ENCODE measurements at regions of chr17 and their contacts with region 1.

Region 1: DNA sequence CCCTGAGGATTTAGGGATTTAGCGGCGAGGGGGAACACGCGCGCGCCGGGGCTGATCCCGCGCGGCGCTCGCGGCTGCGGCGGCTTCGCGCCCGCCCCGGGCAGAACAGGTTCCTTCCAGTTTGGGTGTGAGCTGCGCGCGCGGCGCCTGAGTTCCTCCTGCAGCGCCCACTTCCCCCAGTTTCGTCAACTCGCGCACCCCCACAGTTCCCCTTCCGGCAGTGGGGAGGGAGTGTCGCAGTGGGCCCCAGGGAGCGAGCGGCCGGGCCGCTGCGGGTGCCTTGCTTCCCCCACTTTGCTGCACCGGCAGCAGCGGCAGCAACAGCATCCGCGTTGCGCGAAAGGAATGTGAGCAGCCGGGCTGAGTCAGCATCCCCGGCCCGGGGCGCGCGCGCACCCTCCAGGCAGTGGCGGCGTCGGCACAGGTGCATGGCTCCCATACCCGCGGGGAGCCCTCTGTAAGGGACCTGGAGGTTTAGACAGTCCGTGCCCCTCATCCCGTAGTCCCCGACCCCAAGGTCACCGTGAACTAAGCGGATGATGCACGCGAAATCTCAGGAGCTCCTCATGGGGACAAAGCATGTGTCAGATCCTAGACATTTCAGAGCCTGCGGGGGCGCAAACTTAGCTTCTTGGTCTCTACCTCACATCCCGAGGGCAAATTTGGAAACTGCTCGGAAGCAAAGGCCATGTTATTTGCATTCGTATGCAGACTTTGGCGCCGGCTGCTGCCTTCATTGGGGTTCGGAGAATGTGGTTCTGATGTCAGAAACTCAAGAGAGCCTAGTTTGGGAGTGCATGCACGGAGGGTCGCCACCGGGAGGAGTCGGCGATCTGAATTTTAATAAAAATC is 775 bp downstream of the ARSG start:
- DNase-seq: peak; percentile 96
- H3K4me3 ChIP-seq: peak overlapping the region; percentile 85
- H3K27ac ChIP-seq: peak overlapping the region; percentile 94
- H3K4me1 ChIP-seq: peaks cover 51% of the 10 kb centered on the region
- CTCF ChIP-seq: peak; percentile 75

Region 2: GRCh38 chr17:68172461-68172954 is 119.6 kb before region 1 on chr17:
- CTCF ChIA-PET with region 1: no interaction called
- POLR2A ChIA-PET with region 1: no interaction called
- intact Hi-C with region 1: loop called (anchors 2 kb)
- DNase-seq: peak; percentile 85
- H3K4me3 ChIP-seq: no peak overlapping the region
- H3K27ac ChIP-seq: no peak overlapping the region
- H3K4me1 ChIP-seq: peaks cover 20% of the 10 kb centered on the region
- CTCF ChIP-seq: peak; percentile 100

Region 3: GRCh38 chr17:68247445-68248198 is 44.4 kb before region 1 on chr17 and contains the start of gene AMZ2:
- CTCF ChIA-PET with region 1: no interaction called
- POLR2A ChIA-PET with region 1: interaction called, 11 read pairs
- intact Hi-C with region 1: no loop called
- DNase-seq: peak; percentile 97
- H3K4me3 ChIP-seq: peak within 1 kb of the TSS; percentile 80
- H3K27ac ChIP-seq: peak within 1 kb of the TSS; percentile 90
- H3K4me1 ChIP-seq: peaks cover 86% of the 10 kb centered on the region
- CTCF ChIP-seq: no peak
- total RNA-seq, gene AMZ2: 105 and 117 TPM in 2 replicates

Region 4: DNA sequence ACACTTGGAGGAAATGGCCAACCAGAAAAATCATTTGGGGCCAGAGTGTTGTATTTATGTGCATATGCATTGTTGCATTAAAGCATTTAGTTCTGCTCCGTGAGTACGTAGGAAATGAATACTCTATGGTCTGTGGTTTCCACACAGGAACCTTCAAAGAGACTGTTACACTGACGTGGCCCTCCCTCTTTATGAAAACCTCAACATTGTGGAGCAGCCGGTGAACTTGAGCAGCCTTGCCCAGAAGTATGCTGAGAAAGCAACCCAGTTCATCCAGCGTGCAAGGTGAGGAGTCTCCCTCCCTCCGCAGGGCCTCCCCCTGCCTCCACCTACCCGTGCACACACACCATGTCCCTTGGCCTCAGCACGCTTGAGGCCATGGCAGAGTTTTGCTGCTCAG is 64.5 kb after region 1 on chr17:
- CTCF ChIA-PET with region 1: interaction called, 3 read pairs
- POLR2A ChIA-PET with region 1: interaction called, 3 read pairs
- intact Hi-C with region 1: loop called (anchors 5 kb)
- DNase-seq: no peak
- H3K4me3 ChIP-seq: no peak overlapping the region
- H3K27ac ChIP-seq: no peak overlapping the region
- H3K4me1 ChIP-seq: peaks cover 5% of the 10 kb centered on the region
- CTCF ChIP-seq: no peak

Region 5: DNA sequence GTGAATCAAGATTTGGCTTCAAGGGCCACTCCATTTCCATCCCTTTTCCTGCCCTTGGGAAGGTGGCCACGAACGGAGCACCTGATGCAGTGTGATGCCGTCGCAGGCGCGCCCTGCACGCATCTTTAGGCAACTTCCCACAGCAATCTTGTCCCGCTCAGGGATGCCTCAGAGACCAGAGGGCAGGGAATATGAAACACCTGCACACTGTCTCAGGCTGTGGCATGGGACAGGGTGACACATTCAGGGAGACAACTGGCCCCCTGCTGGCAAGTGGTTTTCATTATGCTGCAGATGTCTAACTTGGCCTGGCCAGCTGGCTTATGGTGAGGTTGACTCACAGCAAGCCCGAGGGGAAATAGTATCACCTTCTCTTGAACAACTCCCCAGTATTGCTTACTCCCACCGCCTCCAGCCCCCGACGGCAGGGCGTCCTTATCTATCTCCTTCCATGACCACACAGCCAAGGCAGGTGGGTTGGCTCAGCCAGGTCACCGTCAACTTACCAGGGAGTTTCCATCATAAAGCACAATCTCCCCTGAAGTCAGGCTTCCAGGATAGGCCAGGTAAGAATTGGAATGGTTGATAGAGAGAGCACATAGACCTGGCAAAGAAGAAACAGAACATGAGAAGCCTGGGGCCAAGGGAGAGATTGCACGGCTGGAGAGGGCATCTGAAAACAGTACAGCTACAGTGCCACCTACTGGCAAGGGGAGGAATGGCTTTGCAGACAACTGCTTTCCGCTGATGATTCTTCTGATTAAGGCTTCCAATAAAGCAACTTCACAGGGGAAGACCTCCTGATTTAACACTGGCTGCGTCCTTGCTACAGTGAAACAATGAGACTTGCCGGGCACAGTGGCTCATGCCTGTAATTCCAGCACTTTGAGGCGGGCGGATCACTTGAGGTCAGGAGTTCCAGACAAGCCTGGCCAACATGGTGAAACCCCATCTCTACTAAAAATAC is 144.1 kb after region 1 on chr17:
- CTCF ChIA-PET with region 1: no interaction called
- POLR2A ChIA-PET with region 1: interaction called, 4 read pairs
- intact Hi-C with region 1: loop called (anchors 1 kb)
- DNase-seq: peak; percentile 93
- H3K4me3 ChIP-seq: peak overlapping the region; percentile 15
- H3K27ac ChIP-seq: peak overlapping the region; percentile 80
- H3K4me1 ChIP-seq: peaks cover 64% of the 10 kb centered on the region
- CTCF ChIP-seq: peak; percentile 95

Region 6: GRCh38 chr17:68519911-68520310 is 227.8 kb after region 1 on chr17:
- CTCF ChIA-PET with region 1: no interaction called
- POLR2A ChIA-PET with region 1: no interaction called
- intact Hi-C with region 1: no loop called
- DNase-seq: no peak
- H3K4me3 ChIP-seq: no peak overlapping the region
- H3K27ac ChIP-seq: no peak overlapping the region
- H3K4me1 ChIP-seq: peaks cover 5% of the 10 kb centered on the region
- CTCF ChIP-seq: no peak

Measured in OCI-LY7 (cell line).